ENCODE measurements at regions of chr12 and their contacts with region 1.

Region 1: GRCh38 chr12:55926738-55927587 is 731 bp downstream of the PYM1 start:
- DNase-seq: peak; percentile 94 to 95
- H3K4me3 ChIP-seq: peak overlapping the region; percentile 75
- H3K4me1 ChIP-seq: peaks cover 26% of the 10 kb centered on the region
- H3K27me3 ChIP-seq: no peaks in the 10 kb centered on the region

Region 2: GRCh38 chr12:55515696-55516095 is 411.3 kb before region 1 on chr12:
- in situ Hi-C with region 1: no loop called
- DNase-seq: no peak
- H3K4me3 ChIP-seq: no peak overlapping the region
- H3K4me1 ChIP-seq: no peaks in the 10 kb centered on the region
- H3K27me3 ChIP-seq: no peaks in the 10 kb centered on the region

Region 3: DNA sequence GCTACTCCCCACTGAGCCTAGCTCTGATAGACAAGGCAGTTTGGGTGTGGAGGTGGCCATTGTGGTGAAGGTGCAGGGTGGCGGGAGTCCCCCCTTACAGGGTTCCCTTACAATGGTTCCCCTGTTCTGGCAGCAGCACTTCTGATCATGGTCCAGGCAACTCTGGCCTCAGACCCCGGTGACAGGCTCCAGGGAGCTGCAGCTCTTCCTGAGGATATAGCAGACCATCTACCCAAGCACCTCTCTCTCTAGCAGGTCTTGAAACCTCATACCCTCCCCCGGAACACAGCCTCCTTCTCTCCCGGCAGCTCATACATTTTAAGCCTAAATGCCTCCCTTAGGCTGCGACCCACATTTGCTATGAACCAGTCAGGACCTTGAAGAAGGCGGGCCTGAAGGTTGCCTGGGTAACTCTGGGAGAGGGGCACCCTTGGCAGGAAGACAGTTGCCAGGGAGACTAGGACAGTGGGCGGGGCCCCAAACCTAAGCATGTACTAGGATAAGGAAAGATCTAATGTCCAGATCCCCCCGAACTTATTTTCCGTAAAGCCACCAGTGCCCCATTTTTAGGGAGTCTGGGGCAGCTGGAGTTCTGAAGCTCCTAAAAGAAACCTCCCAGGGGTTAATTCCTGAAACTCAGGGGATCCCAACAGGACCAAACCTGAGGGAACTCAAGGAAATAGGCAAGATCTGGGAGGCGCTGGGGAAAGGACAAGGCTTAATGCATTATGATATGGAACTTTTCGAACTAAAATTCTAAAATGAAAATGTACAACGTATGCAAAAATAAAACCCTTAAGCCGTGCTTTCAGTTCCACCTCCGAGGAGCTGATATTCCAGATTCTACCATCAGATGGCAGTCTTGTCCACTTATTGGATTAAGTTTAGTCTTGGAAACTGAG is 188.6 kb before region 1 on chr12:
- in situ Hi-C with region 1: loop called (anchors 5 kb)
- DNase-seq: peak; percentile 95
- H3K4me3 ChIP-seq: peak overlapping the region; percentile 31
- H3K4me1 ChIP-seq: peaks cover 14% of the 10 kb centered on the region
- H3K27me3 ChIP-seq: no peaks in the 10 kb centered on the region

Region 4: DNA sequence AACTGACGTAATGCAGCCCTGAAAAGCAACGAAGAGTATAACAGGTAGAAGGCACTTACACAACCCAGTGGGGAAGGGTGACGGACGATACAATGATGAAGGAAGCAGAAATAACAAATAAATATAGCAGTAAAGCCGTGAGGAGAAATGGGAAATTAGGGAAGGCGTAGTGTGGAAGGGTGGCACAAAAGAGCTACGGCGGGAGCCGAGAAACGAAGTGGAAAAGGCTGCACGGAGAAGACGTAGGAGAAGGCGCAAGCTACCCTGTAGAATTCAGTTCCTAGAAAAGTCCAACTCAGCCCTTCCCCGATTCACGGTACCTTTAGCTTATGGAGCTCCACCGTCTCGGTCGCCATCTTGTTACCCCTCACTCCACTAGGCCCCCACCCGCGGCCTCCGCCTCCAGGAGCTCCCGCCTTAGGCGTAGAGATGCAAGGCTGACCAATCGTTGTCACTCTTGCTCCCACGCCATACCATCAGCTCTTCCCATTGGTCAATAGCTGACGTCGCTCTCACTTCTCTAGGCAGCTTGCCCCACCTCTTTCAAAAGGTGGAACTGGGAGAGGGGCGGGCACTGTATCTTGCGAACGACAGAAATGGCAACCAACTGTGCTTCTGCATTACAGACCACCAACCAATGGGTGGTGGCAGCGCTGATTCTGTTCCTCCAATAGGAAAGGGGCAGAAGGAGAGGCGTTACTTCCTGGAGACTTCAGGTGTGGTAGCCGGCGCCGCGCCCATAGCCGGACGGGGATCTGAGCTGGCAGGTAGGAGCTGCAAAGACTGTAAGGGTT is 109.4 kb before region 1 on chr12 and contains the starts of genes ORMDL2 and SARNP:
- in situ Hi-C with region 1: loop called (anchors 5 kb)
- DNase-seq: peak; percentile 98 to 100
- H3K4me3 ChIP-seq: peak within 1 kb of the TSS; percentile 75
- H3K4me1 ChIP-seq: peaks cover 27% of the 10 kb centered on the region
- H3K27me3 ChIP-seq: no peaks in the 10 kb centered on the region

Measured in HAP-1 (cell line).